ENCODE measurements at regions of chr5 and their contacts with region 1.

Region 1: DNA sequence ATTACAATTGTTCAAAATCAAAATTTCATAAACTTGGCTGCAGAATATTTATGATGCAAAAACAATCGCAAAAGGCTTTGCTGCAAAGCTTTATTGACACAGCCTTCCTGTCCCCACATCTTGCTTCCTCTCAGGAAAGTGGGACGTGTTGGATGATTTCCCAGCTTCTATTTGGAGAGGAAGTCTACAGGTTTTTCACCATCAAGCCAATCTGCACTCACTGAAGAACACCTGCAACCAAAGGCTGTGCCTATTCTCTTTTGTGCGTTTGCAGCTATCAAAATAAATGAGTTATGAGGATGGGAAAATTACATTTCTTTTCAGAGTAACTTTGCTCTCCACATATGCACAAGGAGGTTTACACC is 214.4 kb downstream of the PLK2 start:
- DNase-seq: no peak
- CTCF ChIP-seq: no peak

Region 2: GRCh38 chr5:57862457-57862911 is 383.0 kb before region 1 on chr5:
- CTCF ChIA-PET with region 1: no interaction called
- POLR2A ChIA-PET with region 1: no interaction called
- DNase-seq: no peak
- CTCF ChIP-seq: no peak

Region 3: GRCh38 chr5:58235299-58235698 is 10.2 kb before region 1 on chr5:
- CTCF ChIA-PET with region 1: interaction called, 14 read pairs
- POLR2A ChIA-PET with region 1: no interaction called
- DNase-seq: no peak
- CTCF ChIP-seq: no peak

Region 4: DNA sequence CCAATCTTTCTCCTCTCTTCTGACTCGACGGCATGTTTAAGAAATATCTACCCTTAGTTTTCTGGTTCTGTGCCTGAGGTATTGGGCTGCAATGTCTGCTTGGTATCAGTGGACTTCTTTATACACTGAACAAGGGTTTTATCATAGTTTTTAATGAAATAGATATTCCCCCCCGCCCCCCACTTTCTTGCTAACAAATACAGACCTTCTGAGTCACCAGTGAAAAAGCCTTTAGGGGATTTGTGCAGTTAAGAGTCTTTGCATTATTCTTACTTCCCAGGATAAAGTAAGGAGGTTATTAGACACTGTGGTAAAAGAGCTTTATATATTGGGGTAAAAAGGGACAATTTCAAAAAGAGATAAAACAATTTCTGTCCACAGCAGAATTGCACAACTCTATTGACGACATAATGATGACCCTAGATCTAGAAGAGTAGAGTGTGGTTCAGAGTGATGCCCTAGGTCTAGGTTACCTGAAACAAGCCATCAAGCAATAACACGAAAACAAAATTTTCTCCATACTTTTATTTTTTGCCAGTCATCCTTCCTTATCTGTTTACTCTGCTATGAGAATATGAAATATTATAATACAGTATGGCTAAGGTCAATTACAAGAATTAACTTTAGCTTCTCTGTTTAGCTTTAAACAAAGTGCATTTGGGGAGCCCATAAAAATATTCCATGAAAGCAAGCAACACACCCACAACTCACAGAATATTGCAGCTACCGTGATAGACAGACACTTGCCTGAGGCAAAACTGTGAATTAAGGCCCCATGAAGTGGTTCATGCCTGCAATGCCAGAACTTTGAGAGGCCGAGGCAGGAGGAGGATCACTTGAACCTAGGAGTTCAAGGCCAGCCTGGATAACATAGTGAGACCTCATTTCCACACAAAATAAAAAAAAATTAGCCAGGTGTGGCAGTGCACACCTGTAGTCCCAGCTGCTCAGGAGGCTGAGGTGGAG is 103.8 kb after region 1 on chr5:
- CTCF ChIA-PET with region 1: no interaction called
- POLR2A ChIA-PET with region 1: no interaction called
- DNase-seq: no peak
- CTCF ChIP-seq: no peak

Region 5: DNA sequence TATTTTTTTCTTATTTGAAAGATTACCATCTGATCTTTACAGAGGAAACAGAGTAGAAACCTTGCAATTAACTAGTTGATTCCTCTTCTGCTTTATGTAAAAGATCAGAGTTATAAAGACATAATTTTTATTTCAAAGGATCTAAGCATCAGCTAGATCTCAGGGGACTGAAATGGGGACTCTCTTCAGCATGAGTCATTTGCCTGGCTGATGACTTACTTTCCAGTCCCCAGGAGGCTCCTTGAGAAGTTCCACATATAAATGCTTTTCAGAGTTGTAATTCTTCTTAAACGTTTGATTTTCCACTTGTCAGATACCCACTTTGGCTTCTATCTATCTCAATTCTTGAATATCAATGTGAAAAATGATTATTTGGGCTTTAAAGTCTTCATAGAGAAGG is 726.8 kb after region 1 on chr5:
- CTCF ChIA-PET with region 1: no interaction called
- POLR2A ChIA-PET with region 1: no interaction called
- DNase-seq: no peak
- CTCF ChIP-seq: no peak

Measured in GM10248 (cell line).